Activated CD4-positive, alpha-beta memory T cell treated with anti-CD3 and anti-CD28 coated beads for 36 hours (primary cell): ENCODE measurements at regions of chr7 and their contacts with region 1.

Region 1: DNA sequence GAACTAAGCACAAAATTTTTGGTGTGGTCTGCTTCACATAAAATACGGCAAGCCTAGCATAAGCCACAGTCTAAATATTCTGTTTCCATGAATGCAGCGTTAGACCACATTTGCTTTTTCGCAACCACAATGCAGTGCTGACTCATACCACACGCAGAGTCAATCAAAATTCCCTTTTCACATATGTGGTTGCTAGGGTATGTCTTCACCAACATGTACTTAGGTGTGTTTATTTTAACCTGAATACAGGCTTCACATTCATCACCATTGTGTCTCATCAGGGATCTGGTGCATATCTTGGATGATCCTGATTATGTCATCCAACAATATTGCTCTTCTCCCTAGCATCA is 90.8 kb downstream of the CHN2 start:
- DNase-seq: peak; percentile 68
- H3K4me3 Mint-ChIP-seq: no peak overlapping the region
- H3K27ac Mint-ChIP-seq: no peak overlapping the region
- H3K4me1 Mint-ChIP-seq: peaks cover 29% of the 10 kb centered on the region
- H3K27me3 Mint-ChIP-seq: peaks cover 15% of the 10 kb centered on the region

Region 2: DNA sequence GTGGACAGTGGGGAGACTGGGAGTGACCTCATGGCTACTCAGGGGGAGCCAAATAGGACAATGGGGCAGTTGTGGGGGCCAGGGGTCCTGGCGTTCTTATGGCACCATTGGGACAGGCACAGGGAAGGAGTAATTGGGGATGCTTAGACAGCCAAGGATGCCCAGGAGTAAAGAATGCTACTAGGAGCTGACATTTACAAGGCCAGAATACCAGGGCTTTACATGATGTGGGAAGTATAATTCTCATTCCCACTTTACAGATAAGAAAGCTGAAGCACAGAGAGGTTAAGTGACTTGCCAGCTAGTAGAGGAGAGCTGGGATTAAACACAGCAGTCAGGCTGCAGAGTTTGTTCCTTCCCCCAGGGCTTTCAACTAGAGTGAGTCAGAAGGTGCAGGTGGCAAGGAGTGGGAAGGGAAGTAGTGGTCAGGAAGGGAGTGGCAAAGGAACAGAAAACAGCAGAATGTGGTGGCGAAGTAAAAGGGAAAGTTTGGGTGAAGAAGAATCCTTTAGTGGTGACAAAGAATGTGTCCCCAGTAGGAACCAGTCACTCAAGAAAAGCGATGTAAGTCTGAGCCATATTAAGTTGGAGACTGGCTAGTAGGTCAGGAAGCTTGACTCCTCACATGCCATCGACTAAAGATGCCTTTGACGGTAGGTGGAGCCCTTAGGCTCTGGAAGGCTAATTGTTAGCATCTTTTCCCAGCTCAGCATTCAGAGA is 171.9 kb before region 1 on chr7:
- CTCF ChIA-PET with region 1: interaction called, 3 read pairs
- POLR2A ChIA-PET with region 1: no interaction called
- intact Hi-C with region 1: loop called (anchors 1 kb)
- DNase-seq: peak; percentile 36
- H3K4me3 Mint-ChIP-seq: no peak overlapping the region
- H3K27ac Mint-ChIP-seq: no peak overlapping the region
- H3K4me1 Mint-ChIP-seq: peaks cover 11% of the 10 kb centered on the region
- H3K27me3 Mint-ChIP-seq: peaks cover 22% of the 10 kb centered on the region

Region 3: DNA sequence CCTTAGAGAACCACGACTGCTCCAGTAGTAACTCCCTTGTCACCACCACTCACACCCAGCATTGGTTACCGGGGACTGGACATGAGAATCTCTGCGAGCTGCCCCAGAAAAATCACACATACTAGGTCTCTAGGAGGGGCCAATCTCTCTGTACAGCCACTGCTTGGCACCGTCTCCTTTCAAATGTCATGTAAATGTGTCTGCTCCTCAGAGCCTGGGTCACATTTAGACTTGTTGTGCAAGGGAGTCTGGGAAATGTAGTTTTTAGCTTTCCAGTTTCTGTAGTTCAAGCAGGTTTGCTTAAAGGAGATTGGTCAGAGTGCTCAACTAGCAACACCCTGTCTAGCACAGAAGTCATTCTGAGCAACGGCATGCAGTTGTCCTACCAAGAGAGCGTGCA is 30.8 kb before region 1 on chr7:
- CTCF ChIA-PET with region 1: no interaction called
- POLR2A ChIA-PET with region 1: no interaction called
- intact Hi-C with region 1: no loop called
- DNase-seq: no peak
- H3K4me3 Mint-ChIP-seq: no peak overlapping the region
- H3K27ac Mint-ChIP-seq: no peak overlapping the region
- H3K4me1 Mint-ChIP-seq: no peaks in the 10 kb centered on the region
- H3K27me3 Mint-ChIP-seq: no peaks in the 10 kb centered on the region

Region 4: DNA sequence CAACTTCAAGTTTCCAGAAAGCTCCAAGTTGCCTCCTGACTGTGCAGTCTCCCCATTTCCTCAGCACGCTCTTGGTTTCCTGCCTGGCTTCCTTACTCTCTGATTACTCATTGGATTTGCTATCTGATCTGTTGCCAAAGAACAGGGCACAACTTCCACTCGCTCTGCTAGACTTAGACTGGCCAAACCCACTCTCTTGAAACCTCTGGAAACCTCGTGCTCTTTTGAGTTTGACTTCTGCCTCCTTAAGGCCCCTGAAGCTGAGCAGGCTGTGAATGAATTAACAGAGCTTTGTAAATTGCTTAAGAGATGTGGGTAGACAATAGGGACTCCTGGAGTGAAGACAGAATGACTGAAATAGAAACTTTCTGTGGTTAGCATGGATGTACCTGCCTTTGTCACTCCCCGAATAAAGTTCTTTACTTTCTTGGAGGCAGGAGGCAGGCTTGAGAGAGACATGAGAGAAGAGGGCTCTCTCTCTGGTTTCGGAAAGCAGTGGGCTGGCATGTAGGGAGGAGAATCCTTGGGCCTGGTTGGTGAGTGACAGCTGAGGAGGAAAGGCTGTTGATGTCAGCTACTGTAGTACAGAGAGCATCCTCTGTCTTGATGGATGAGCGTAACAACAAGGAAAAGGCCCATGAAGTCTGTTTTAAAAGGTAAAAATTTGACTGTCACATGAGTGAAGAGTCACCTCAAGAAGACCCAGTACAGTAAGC is 20.1 kb before region 1 on chr7:
- CTCF ChIA-PET with region 1: interaction called, 3 read pairs
- POLR2A ChIA-PET with region 1: interaction called, 3 read pairs
- intact Hi-C with region 1: loop called (anchors 1 kb)
- DNase-seq: peak; percentile 19
- H3K4me3 Mint-ChIP-seq: no peak overlapping the region
- H3K27ac Mint-ChIP-seq: no peak overlapping the region
- H3K4me1 Mint-ChIP-seq: peaks cover 10% of the 10 kb centered on the region
- H3K27me3 Mint-ChIP-seq: peaks cover 1% of the 10 kb centered on the region

Region 5: GRCh38 chr7:29270594-29271318 is 14.7 kb before region 1 on chr7:
- CTCF ChIA-PET with region 1: interaction called, 4 read pairs
- POLR2A ChIA-PET with region 1: no interaction called
- intact Hi-C with region 1: loop called (anchors 1 kb)
- DNase-seq: peak; percentile 38
- H3K4me3 Mint-ChIP-seq: no peak overlapping the region
- H3K27ac Mint-ChIP-seq: no peak overlapping the region
- H3K4me1 Mint-ChIP-seq: peaks cover 20% of the 10 kb centered on the region
- H3K27me3 Mint-ChIP-seq: peaks cover under 1% of the 10 kb centered on the region